Activated B cell treated with CpG ODN at 0.5 μM for 24 hours (primary cell): ENCODE measurements at regions of chrX and their contacts with region 1.

Region 1: DNA sequence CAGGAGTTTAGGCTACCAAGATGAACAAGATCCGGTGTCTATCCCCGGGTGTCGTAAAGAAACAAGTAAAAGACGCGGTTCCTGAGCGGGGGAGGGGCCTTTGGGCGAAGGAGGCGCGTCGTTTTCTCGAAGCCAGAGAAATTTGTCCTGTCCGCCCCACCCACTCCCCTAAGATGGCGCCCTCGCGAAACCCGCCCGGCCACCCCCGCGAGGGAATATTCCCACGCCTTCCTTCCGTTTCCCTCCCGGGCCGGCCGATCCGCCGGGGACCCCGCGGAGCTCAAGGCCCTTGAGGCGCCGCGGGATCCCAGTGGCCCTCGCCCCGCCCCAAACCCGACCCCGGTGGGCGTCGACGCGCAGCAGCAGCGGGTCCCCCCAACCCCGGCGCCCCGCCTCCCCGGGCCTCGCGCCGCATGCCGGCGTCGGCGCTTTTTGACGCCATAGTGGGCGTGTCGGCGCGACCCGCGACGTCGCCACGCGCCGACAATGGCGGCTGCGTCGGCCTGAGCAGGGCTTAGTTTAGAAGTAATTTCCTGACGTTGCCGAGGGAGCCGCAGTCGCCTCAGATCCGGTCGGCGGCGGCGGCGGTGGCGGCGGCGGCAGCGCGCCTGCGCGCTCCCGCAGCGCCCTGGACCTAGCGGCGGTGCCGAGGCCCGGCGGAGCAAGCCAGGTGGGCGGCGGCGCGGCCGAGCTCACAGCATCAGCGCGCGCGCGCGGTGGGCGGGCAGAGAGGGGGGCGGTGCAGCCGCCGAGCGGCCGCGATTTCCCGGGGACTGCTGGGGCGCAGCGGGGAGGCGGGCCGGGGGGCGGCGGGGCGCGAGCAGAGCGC is at the start of gene HTATSF1:
- DNase-seq: peak; percentile 79
- ATAC-seq: peak; percentile 81
- H3K4me3 Mint-ChIP-seq: peak within 1 kb of the TSS; percentile 89
- H3K27ac Mint-ChIP-seq: peak within 1 kb of the TSS; percentile 97
- H3K4me1 Mint-ChIP-seq: peaks cover 22% of the 10 kb centered on the region
- H3K27me3 Mint-ChIP-seq: no peaks in the 10 kb centered on the region
- CTCF ChIP-seq: no peak
- total RNA-seq, gene HTATSF1: 23.9 and 24.5 TPM in 2 replicates

Region 2: GRCh38 chrX:135421537-135421931 is 1075.5 kb before region 1 on chrX:
- CTCF ChIA-PET with region 1: no interaction called
- POLR2A ChIA-PET with region 1: no interaction called
- intact Hi-C with region 1: loop called (anchors 2 kb)
- DNase-seq: peak; percentile 76
- ATAC-seq: peak; percentile 95
- H3K4me3 Mint-ChIP-seq: peak overlapping the region; percentile 64
- H3K27ac Mint-ChIP-seq: no peak overlapping the region
- H3K4me1 Mint-ChIP-seq: peaks cover 4% of the 10 kb centered on the region
- H3K27me3 Mint-ChIP-seq: peaks cover 5% of the 10 kb centered on the region
- CTCF ChIP-seq: no peak

Region 3: GRCh38 chrX:135985141-135985972 is 511.6 kb before region 1 on chrX and contains the start of gene SLC9A6:
- CTCF ChIA-PET with region 1: no interaction called
- POLR2A ChIA-PET with region 1: interaction called, 5 read pairs
- intact Hi-C with region 1: loop called (anchors 2 kb)
- DNase-seq: peak; percentile 64
- ATAC-seq: peak; percentile 93
- H3K4me3 Mint-ChIP-seq: peak within 1 kb of the TSS; percentile 91
- H3K27ac Mint-ChIP-seq: peak within 1 kb of the TSS; percentile 84
- H3K4me1 Mint-ChIP-seq: peaks cover 43% of the 10 kb centered on the region
- H3K27me3 Mint-ChIP-seq: no peaks in the 10 kb centered on the region
- CTCF ChIP-seq: no peak
- total RNA-seq, gene SLC9A6: 13.5 and 16.7 TPM in 2 replicates

Region 4: DNA sequence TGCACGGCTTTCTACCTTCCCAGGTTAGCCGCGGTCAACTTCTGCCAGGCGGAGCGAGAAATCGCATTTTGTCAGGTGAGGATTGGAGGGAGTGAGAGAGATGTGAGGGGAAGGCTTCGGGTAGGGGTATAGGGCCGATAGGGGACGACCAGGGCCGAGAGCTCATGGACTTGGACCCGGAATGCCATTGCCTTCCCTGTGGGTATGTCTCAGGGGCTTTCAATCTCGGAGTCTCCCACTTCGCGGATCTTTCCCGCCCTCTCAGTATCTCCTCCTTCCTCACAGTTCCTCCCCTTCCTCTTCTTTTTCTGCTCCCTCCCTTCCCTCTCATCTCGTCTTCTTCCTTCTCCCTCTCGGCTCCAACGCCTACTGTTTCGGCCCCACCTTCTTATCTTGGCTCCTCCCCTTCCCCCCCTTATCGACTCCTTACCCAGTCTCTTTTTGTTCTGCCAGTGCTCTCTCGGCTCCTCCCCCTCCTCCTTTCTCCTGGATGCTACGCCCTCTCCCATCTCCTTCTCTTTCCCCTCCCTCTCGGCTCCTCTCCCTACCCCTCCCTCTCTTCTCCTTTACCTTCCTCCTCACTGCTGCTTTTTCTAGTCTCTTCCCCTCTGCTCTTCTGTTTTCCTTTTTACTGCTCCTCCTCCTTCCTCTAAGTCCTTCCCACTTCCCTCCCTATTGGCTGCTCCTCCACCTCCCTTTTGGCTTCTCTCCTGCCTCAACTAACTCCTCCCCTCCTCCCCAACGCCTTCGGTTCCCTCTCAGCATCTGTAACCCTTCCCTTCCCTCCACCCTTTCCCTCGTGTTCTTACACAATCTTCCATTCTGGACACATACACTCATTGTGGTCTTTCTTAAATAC is 413.0 kb after region 1 on chrX:
- CTCF ChIA-PET with region 1: no interaction called
- POLR2A ChIA-PET with region 1: no interaction called
- intact Hi-C with region 1: loop called (anchors 1 kb)
- DNase-seq: peak; percentile 32
- ATAC-seq: peak; percentile 74
- H3K4me3 Mint-ChIP-seq: peak overlapping the region; percentile 95
- H3K27ac Mint-ChIP-seq: peak overlapping the region; percentile 87
- H3K4me1 Mint-ChIP-seq: peaks cover 6% of the 10 kb centered on the region
- H3K27me3 Mint-ChIP-seq: no peaks in the 10 kb centered on the region
- CTCF ChIP-seq: no peak